ENCODE measurements at regions of chr6 and their contacts with region 1.

Region 1: GRCh38 chr6:118283766-118284165 is 264.3 kb upstream of the PLN start:
- DNase-seq: no peak
- ATAC-seq: peak; percentile 71 to 90 (median 78)
- H3K4me3 ChIP-seq: peak overlapping the region; percentile 35
- H3K27ac ChIP-seq: no peak overlapping the region
- H3K4me1 ChIP-seq: peaks cover 16% of the 10 kb centered on the region
- H3K27me3 ChIP-seq: no peaks in the 10 kb centered on the region
- CTCF ChIP-seq: peak; percentile 80

Region 2: DNA sequence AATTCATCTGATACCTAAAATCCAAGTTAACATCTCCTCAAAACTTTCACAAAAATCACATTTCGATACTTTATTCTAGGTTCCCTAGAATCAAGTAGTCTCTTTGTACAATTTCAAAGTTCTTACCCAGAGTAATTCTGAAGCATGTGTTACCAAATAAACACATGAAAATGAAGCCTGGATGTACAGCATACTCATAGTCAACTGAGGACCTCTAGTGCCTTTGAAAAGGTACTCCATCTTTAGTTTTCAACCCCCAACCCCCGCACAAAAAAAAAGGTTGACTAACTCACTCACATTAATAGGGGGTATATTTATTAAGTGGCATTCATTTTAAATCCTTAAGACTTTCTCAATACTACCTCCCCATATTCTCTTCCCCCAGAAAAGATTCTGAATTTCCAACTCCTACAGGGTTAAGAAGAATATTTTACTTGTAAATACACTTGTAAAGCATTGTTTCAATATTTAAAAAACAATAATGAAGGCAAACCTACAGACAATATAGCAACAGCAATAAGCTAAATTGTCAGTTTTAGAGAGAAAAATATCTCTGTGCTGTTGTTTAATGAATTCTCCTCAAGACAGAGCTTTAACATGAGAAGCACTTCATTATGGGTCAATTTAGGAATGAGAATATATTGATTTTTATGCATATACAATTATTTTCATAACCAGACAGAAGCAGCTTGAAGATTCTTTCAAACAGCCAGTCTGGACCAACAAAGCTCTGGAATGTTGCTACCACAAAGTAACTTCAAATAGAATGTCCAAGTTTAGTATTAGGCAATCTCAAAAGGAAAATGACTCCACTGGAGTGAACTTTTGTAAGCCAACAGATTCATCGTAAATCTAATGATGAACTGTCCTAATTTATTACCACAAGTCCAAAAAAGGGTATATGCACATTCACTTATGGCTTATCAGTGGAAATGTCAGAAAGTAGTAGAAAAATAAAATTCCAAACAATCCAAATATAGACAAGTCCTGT is 267.6 kb after region 1 on chr6:
- intact Hi-C with region 1: loop called in 1 of 2 experiments (anchors 1 kb)
- DNase-seq: no peak
- ATAC-seq: peak; percentile 71 to 76 (median 74)
- H3K4me3 ChIP-seq: peak overlapping the region; percentile 68
- H3K27ac ChIP-seq: peak overlapping the region; percentile 87
- H3K4me1 ChIP-seq: peaks cover 39% of the 10 kb centered on the region
- H3K27me3 ChIP-seq: no peaks in the 10 kb centered on the region
- CTCF ChIP-seq: peak; percentile 63

Region 3: DNA sequence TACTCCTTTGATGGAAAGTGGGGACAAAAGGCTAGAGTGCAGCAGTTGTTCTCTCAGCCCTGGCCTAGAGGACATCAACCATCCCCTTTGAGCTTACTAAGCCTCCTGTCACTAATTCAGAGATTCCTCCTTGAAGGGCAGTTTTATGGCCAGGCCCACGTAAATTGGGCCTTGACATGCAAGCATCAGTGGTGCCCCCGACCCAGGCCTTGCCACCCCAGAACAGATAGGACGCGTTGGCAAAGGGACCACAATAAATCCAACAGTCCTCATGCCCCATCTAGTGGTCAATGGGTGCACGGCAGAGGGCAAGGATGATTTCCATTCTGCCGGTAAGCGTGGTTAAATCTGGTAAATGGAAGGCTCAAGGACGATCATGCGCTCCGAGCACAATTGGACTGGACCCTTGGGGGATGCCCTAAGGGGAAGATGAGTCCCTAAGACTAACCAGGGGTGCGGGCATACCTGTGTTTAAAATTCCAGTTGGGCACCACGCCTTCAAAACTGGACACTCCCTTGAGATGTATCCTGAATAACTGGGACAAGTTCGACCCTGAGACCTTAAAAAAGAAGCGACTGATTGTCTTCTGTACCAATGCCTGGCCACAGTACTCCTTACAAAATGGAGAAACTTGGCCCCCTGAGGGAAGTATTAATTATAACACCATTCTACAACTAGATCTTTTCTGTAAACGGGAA is 335.1 kb after region 1 on chr6:
- intact Hi-C with region 1: loop called (anchors 5 to 10 kb)
- DNase-seq: peak; percentile 47 to 76
- ATAC-seq: peak; percentile 81 to 89 (median 83)
- H3K4me3 ChIP-seq: no peak overlapping the region
- H3K27ac ChIP-seq: peak overlapping the region; percentile 33
- H3K4me1 ChIP-seq: peaks cover 68% of the 10 kb centered on the region
- H3K27me3 ChIP-seq: no peaks in the 10 kb centered on the region
- CTCF ChIP-seq: peak; percentile 88

Region 4: DNA sequence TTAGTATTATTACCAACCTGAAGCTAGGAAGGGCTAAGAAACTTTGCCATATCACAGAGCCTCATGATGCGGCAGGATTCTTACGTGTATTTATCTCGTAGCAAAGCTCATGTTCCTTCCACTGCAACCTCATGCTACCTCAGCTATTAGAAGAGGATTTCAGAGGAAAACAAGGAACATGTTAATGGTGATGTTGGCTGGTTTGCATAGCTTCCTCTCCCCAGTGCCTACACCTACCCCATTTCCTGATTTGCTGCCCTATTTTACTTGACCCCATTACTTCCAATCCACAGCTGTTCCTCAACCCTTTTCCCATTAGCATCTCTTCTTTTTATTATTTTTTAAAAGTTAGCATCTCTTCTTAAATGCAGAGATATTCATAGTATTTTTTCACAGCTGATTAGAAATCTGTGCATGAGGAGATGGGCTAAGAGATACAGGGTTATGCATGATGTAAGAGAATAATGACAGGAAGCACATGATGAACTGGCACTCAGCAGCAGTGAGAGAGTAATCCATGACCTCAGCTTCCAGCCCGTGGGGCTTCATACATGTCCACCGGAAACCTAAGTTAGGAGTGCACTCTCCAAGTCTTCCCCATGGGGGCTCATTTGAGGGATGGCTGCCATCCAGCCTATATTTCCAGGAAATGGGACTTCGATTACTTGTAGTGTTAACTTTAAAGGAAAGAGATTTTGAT is 504.1 kb after region 1 on chr6:
- intact Hi-C with region 1: loop called in 1 of 2 experiments (anchors 10 kb)
- DNase-seq: no peak
- ATAC-seq: peak in 3 of 4 donors; percentile 37 to 51 (median 42)
- H3K4me3 ChIP-seq: no peak overlapping the region
- H3K27ac ChIP-seq: no peak overlapping the region
- H3K4me1 ChIP-seq: no peaks in the 10 kb centered on the region
- H3K27me3 ChIP-seq: no peaks in the 10 kb centered on the region
- CTCF ChIP-seq: no peak